ENCODE measurements at regions of chr9 and their contacts with region 1.

Region 1: DNA sequence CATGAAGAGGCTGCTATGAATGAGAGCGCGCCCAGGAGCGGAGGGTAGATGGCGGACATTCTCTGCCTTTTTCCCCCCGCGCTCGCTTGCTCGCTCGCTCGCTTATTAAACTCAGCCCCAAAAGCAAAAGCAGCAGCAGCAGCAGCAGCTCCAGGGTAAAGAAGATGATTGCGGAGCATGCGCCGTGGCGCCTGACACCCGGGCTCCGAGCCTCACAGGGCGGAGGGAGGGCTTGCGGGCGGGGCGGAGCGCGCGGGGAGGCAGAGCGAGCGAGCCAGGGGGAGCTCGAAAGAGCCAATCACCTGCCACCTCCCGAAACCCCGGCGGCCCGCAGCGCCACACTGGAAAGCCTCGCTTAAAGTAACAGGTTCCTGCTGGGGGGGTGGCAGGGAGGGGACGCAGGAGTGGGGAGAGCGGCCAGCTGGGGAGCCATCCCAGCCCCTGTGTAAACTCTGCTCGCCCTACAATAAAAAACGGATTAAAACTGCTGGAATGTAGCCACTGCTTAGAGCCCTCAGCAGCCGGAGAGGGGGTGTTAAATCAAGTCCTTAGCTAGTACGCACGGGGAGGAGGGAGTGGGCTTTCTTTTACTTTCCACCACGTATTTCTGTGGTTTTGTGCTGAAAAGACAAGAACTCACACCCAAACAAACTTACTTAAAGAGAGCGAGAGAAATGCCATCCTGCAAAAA is at the start of gene MLLT3:
- DNase-seq: peak; percentile 91 to 98 (median 98)
- ATAC-seq: peak; percentile 88
- H3K4me3 ChIP-seq: peak within 1 kb of the TSS; percentile 84
- H3K4me3 Mint-ChIP-seq: peak within 1 kb of the TSS; percentile 92 to 100 (median 98)
- H3K27ac ChIP-seq: peak within 1 kb of the TSS; percentile 89
- H3K27ac Mint-ChIP-seq: peak within 1 kb of the TSS; percentile 89 to 100 (median 99)
- H3K4me1 ChIP-seq: peaks cover 21 to 40% of the 10 kb centered on the region in 2 donors
- H3K4me1 Mint-ChIP-seq: peaks cover 30 to 48% (median 45%) of the 10 kb centered on the region in 7 donors
- H3K27me3 ChIP-seq: no peaks in the 10 kb centered on the region
- H3K27me3 Mint-ChIP-seq: no peaks in the 10 kb centered on the region
- total RNA-seq, gene MLLT3: 40.9 to 85.3 (median 71.3) TPM

Region 2: DNA sequence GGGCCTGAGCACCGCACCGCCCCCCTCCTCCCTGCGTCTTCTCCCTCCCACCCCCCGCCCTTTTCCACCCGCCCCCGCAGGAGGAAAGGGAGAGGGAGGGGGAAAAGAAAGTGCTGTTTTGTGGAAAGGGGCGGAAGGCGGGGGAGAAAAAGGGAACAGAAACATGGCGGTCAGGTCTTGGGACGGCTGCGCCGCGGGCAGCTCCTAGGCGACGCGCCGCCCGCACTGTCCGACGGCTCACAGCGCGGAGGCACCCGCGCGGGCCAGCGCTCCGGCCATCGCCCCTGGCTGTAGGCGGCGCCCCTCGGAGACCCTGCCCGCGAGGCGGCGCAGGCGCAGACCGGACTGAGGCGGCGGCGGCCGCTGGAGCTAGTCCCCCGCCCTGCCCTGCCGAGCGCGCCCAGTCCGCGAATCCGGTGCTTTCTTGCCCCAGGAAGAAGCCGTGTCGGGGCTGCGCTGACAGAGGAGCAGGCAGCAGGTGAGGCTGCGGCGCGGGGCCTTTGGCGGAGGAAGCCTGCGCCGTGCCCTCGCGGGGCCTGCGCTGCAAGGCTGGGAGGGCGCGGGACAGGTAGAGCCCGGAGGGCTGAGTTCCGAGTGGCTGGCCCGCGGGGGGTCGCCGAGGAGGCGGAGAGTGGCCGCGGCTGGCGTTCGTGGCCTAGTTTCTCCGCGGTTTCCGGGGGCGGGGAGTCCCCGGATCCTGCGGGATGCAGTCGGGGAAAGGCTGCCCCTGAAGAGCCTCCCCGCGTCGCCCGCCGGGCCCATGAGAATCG is 1391.9 kb before region 1 on chr9 and contains the start of gene DENND4C:
- CTCF ChIA-PET with region 1: no interaction called
- POLR2A ChIA-PET with region 1: no interaction called
- intact Hi-C with region 1: loop called in 1 of 2 experiments (anchors 10 kb)
- DNase-seq: peak; percentile 60 to 86 (median 81)
- ATAC-seq: peak; percentile 84
- H3K4me3 ChIP-seq: peak within 1 kb of the TSS; percentile 61
- H3K4me3 Mint-ChIP-seq: peak within 1 kb of the TSS in 3 of 10 donors; percentile 81 to 84 (median 84)
- H3K27ac ChIP-seq: peak within 1 kb of the TSS; percentile 81
- H3K27ac Mint-ChIP-seq: peak within 1 kb of the TSS in 6 of 9 donors; percentile 65 to 94 (median 88)
- H3K4me1 ChIP-seq: peaks cover 11 to 22% of the 10 kb centered on the region in 2 donors
- H3K4me1 Mint-ChIP-seq: peaks cover 0 to 24% (median 20%) of the 10 kb centered on the region in 7 donors
- H3K27me3 ChIP-seq: no peaks in the 10 kb centered on the region
- H3K27me3 Mint-ChIP-seq: no peaks in the 10 kb centered on the region
- total RNA-seq, gene DENND4C: 43.5 to 77.5 (median 52.0) TPM

Region 3: DNA sequence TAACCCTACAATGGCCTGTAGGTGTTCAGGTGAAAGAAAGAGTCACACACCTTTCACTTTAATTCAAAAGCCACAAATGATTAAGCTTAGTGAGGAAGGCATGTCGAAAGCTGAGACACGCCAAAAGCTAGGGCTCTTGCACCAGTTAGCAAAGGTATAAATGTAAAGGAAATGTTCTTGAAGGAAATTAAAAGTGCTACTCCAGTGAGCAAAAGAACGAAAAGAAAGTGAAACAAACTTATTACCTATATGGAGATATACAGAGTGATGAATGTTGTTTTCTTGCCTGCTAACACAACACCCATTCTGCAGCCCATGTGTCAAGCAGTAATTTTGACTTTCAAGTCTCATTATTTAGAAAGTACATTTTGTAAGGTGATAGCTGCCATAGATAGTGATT is 579.4 kb before region 1 on chr9:
- CTCF ChIA-PET with region 1: no interaction called
- POLR2A ChIA-PET with region 1: no interaction called
- intact Hi-C with region 1: loop called (anchors 1 to 2 kb)
- DNase-seq: peak in 6 of 9 donors; percentile 6 to 46 (median 34)
- ATAC-seq: peak; percentile 59
- H3K4me3 ChIP-seq: peak overlapping the region; percentile 28
- H3K4me3 Mint-ChIP-seq: peak overlapping the region; percentile 61 to 85 (median 80)
- H3K27ac ChIP-seq: peak overlapping the region; percentile 17
- H3K27ac Mint-ChIP-seq: peak overlapping the region; percentile 84 to 95 (median 91)
- H3K4me1 ChIP-seq: peaks cover 0 to 12% of the 10 kb centered on the region in 2 donors
- H3K4me1 Mint-ChIP-seq: peaks cover 9 to 43% (median 27%) of the 10 kb centered on the region in 7 donors
- H3K27me3 ChIP-seq: no peaks in the 10 kb centered on the region
- H3K27me3 Mint-ChIP-seq: no peaks in the 10 kb centered on the region

Region 4: GRCh38 chr9:20343325-20343724 is 279.1 kb before region 1 on chr9:
- CTCF ChIA-PET with region 1: no interaction called
- POLR2A ChIA-PET with region 1: no interaction called
- intact Hi-C with region 1: no loop called
- DNase-seq: no peak
- ATAC-seq: no peak
- H3K4me3 ChIP-seq: no peak overlapping the region
- H3K4me3 Mint-ChIP-seq: peak overlapping the region in 1 of 10 donors; percentile 19
- H3K27ac ChIP-seq: no peak overlapping the region
- H3K27ac Mint-ChIP-seq: peak overlapping the region in 8 of 9 donors; percentile 7 to 83 (median 32)
- H3K4me1 ChIP-seq: no peaks in the 10 kb centered on the region
- H3K4me1 Mint-ChIP-seq: peaks cover 4 to 53% (median 42%) of the 10 kb centered on the region in 7 donors
- H3K27me3 ChIP-seq: no peaks in the 10 kb centered on the region
- H3K27me3 Mint-ChIP-seq: no peaks in the 10 kb centered on the region

Region 5: DNA sequence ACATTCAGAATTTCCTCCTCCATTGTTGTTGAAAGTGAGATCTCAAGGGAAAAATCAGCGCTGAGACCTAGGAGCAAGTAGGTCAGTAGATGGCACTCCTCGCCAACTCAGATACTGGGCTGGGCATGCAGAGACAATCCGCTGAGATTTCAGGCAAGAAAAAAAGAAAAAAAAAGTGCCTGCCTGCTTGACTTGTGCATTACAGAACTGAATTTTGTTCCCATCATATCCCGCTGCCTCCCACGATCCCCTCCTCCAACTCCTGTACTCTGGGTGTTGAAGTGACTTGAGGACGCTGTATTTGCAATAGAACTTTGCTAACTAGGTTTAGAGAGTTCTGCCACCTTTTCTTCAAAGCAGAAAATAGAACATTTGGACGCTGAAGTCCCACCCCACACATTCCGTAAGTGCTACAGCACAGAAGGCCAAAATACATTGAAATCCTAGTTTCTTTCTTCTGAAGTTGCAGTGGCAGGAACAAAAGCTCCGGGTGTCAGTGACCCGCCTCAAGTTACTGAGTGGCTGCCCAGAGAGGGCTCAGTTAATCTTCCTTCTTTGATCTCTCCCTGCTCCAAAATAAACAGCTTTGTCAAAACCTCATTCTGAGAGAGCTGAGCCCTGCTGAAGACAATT is 266.0 kb before region 1 on chr9:
- CTCF ChIA-PET with region 1: interaction called, 9 read pairs
- POLR2A ChIA-PET with region 1: interaction called, 8 read pairs
- intact Hi-C with region 1: loop called (anchors 1 kb)
- DNase-seq: peak; percentile 8 to 78 (median 66)
- ATAC-seq: peak; percentile 82
- H3K4me3 ChIP-seq: no peak overlapping the region
- H3K4me3 Mint-ChIP-seq: peak overlapping the region in 7 of 10 donors; percentile 12 to 76 (median 55)
- H3K27ac ChIP-seq: no peak overlapping the region
- H3K27ac Mint-ChIP-seq: peak overlapping the region; percentile 5 to 94 (median 79)
- H3K4me1 ChIP-seq: peaks cover 0 to 29% of the 10 kb centered on the region in 2 donors
- H3K4me1 Mint-ChIP-seq: peaks cover 24 to 83% (median 55%) of the 10 kb centered on the region in 7 donors
- H3K27me3 ChIP-seq: no peaks in the 10 kb centered on the region
- H3K27me3 Mint-ChIP-seq: no peaks in the 10 kb centered on the region

Region 6: GRCh38 chr9:20604562-20604961 is 17.9 kb before region 1 on chr9:
- CTCF ChIA-PET with region 1: interaction called, 4 read pairs
- POLR2A ChIA-PET with region 1: interaction called, 10 read pairs
- intact Hi-C with region 1: loop called (anchors 1 to 2 kb)
- DNase-seq: no peak
- ATAC-seq: peak; percentile 58
- H3K4me3 ChIP-seq: no peak overlapping the region
- H3K4me3 Mint-ChIP-seq: peak overlapping the region in 9 of 10 donors; percentile 7 to 79 (median 69)
- H3K27ac ChIP-seq: peak overlapping the region; percentile 29
- H3K27ac Mint-ChIP-seq: peak overlapping the region; percentile 9 to 80 (median 56)
- H3K4me1 ChIP-seq: peaks cover 0 to 33% of the 10 kb centered on the region in 2 donors
- H3K4me1 Mint-ChIP-seq: peaks cover 41 to 99% (median 93%) of the 10 kb centered on the region in 7 donors
- H3K27me3 ChIP-seq: no peaks in the 10 kb centered on the region
- H3K27me3 Mint-ChIP-seq: no peaks in the 10 kb centered on the region

Region 7: GRCh38 chr9:20929276-20929675 is 306.8 kb after region 1 on chr9:
- CTCF ChIA-PET with region 1: interaction called, 3 read pairs
- POLR2A ChIA-PET with region 1: interaction called, 4 read pairs
- intact Hi-C with region 1: loop called in 1 of 2 experiments (anchors 5 kb)
- DNase-seq: no peak
- ATAC-seq: no peak
- H3K4me3 ChIP-seq: no peak overlapping the region
- H3K4me3 Mint-ChIP-seq: no peak overlapping the region
- H3K27ac ChIP-seq: no peak overlapping the region
- H3K27ac Mint-ChIP-seq: no peak overlapping the region
- H3K4me1 ChIP-seq: no peaks in the 10 kb centered on the region
- H3K4me1 Mint-ChIP-seq: peaks cover 0 to 27% (median 7%) of the 10 kb centered on the region in 7 donors
- H3K27me3 ChIP-seq: no peaks in the 10 kb centered on the region
- H3K27me3 Mint-ChIP-seq: no peaks in the 10 kb centered on the region

Region 8: GRCh38 chr9:21802195-21803000 is 1179.9 kb after region 1 on chr9 and contains the start of gene MTAP:
- CTCF ChIA-PET with region 1: no interaction called
- POLR2A ChIA-PET with region 1: no interaction called
- intact Hi-C with region 1: loop called in 1 of 2 experiments (anchors 5 kb)
- DNase-seq: peak in 7 of 9 donors; percentile 46 to 81 (median 72)
- ATAC-seq: peak; percentile 88
- H3K4me3 ChIP-seq: peak within 1 kb of the TSS; percentile 92
- H3K4me3 Mint-ChIP-seq: peak within 1 kb of the TSS; percentile 96 to 100 (median 99)
- H3K27ac ChIP-seq: peak within 1 kb of the TSS; percentile 69
- H3K27ac Mint-ChIP-seq: peak within 1 kb of the TSS; percentile 92 to 99 (median 96)
- H3K4me1 ChIP-seq: peaks cover 10 to 25% of the 10 kb centered on the region in 2 donors
- H3K4me1 Mint-ChIP-seq: peaks cover 24 to 52% (median 40%) of the 10 kb centered on the region in 7 donors
- H3K27me3 ChIP-seq: peaks cover 0 to 4% of the 10 kb centered on the region in 2 donors
- H3K27me3 Mint-ChIP-seq: peaks cover 0 to 46% (median 8%) of the 10 kb centered on the region in 5 donors
- total RNA-seq, gene MTAP: 29.0 to 50.7 (median 43.2) TPM

Measured in naive thymus-derived CD4-positive, alpha-beta T cell (primary cell).